Activated CD8-positive, alpha-beta T cell treated with anti-CD3 and anti-CD28 coated beads, Interleukin-2, amount 10 ng/mL, durations not matched to agents 7 days and 5 days (primary cell): ENCODE measurements at regions of chr13 and their contacts with region 1.

Region 1: DNA sequence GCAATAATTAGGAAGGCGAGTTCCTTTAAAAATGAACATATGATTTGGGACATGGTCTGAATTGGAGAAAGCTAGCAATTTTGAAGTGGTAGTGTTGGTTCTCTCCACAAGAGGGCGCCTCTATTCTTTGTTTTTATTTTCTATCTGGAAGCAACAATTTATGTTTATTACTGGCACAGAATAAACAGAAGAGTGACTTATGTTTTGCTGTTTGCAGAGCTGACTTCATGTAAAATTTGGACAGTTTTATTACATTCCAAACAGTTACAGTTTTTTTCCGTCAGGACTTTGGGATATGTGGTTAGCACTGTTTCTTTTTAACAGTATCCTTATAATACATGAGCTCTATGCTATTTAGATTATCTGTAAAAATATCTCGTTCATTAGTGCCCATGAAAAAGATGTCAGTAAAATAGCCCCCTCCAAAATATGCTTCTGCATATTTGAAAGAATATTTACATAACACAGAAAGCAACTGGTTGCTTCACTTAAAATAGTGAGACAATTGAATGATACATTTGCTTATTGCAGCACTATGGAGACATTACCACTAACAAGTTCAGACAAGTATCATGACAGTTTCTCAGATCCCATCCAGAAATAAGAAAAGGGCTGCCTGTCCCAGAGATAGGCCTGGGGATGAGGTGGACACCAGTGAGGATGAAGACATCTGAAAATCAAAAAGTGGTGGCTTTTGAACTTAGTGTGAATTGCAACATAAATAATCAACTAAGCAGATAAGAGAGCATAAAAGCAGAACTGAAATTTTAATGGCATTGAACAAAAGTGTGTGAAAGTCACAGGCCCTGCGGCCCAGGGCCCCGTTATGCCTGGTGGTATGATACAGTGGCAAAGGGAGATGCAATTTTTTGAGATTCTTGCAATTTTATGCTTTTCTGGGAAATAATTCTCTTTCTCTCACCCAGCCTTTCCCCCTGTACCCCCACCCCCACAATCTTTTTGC is 32.3 kb upstream of the FGF9 start:
- DNase-seq: peak; percentile 47
- ATAC-seq: no peak
- H3K4me3 Mint-ChIP-seq: no peak overlapping the region
- H3K27ac Mint-ChIP-seq: no peak overlapping the region
- H3K4me1 Mint-ChIP-seq: no peaks in the 10 kb centered on the region
- H3K27me3 Mint-ChIP-seq: peaks cover 4% of the 10 kb centered on the region

Region 2: GRCh38 chr13:21670883-21671619 is 32.5 kb after region 1 on chr13 and contains the start of gene FGF9:
- CTCF ChIA-PET with region 1: interaction called, 15 read pairs
- POLR2A ChIA-PET with region 1: interaction called, 3 read pairs
- DNase-seq: peak; percentile 81
- ATAC-seq: peak; percentile 82
- H3K4me3 Mint-ChIP-seq: peak within 1 kb of the TSS; percentile 80
- H3K27ac Mint-ChIP-seq: peak within 1 kb of the TSS; percentile 75
- H3K4me1 Mint-ChIP-seq: peaks cover 44% of the 10 kb centered on the region
- H3K27me3 Mint-ChIP-seq: peaks cover 53% of the 10 kb centered on the region
- total RNA-seq, gene FGF9: 0.21 TPM in 1 of 2 experiments, not detected in the other